GM10248 (cell line): ENCODE measurements at regions of chr12 and their contacts with region 1.

Region 1: GRCh38 chr12:128810182-128811127 is 13.3 kb downstream of the SLC15A4 start:
- DNase-seq: peak; percentile 65
- CTCF ChIP-seq: no peak

Region 2: DNA sequence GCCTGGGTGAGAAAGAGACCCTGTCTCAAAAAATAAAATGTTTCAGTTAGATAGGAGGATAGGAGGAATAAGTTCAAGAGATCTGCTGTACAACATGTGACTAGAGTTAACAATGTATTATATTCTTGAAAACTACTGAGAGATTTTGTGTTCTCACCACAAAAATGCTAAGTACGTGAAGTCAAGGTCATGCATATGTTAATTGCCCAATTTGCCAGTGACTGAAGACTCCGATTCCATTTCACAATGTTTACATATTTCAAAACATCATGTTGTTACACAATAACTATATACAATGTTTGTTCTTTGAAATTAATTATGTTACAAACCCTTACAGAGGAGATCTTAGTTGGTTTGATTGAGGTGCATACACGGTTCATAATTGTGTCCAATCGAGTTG is 38.8 kb before region 1 on chr12:
- CTCF ChIA-PET with region 1: no interaction called
- POLR2A ChIA-PET with region 1: no interaction called
- DNase-seq: no peak
- CTCF ChIP-seq: no peak

Region 3: GRCh38 chr12:128820723-128821432 is 10.4 kb after region 1 on chr12:
- CTCF ChIA-PET with region 1: interaction called, 34 read pairs
- POLR2A ChIA-PET with region 1: interaction called, 32 read pairs
- DNase-seq: peak; percentile 78
- CTCF ChIP-seq: no peak

Region 4: DNA sequence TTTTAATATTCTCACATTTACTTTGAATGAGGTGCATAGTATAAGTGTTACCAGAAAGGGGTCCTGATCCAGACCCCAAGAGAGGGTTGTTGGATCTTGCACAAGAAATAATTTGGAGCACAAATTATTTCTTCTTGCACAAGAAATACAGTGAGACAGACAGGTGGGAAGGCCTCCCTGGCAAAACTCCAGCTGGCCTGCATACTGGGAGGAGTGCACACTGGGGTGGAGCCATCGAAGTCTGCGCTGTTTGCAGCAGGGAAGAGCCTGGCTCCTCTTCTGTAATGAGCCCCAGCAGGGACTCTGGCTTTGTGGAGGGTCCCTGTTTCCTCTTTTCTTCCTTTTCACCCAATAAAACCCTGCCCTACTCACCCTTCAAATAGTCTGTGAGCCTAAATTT is 184.4 kb after region 1 on chr12:
- CTCF ChIA-PET with region 1: no interaction called
- POLR2A ChIA-PET with region 1: no interaction called
- DNase-seq: no peak
- CTCF ChIP-seq: no peak